Heart left ventricle (tissue), 16 donors: ENCODE measurements at regions of chr22 and their contacts with region 1.

Region 1: DNA sequence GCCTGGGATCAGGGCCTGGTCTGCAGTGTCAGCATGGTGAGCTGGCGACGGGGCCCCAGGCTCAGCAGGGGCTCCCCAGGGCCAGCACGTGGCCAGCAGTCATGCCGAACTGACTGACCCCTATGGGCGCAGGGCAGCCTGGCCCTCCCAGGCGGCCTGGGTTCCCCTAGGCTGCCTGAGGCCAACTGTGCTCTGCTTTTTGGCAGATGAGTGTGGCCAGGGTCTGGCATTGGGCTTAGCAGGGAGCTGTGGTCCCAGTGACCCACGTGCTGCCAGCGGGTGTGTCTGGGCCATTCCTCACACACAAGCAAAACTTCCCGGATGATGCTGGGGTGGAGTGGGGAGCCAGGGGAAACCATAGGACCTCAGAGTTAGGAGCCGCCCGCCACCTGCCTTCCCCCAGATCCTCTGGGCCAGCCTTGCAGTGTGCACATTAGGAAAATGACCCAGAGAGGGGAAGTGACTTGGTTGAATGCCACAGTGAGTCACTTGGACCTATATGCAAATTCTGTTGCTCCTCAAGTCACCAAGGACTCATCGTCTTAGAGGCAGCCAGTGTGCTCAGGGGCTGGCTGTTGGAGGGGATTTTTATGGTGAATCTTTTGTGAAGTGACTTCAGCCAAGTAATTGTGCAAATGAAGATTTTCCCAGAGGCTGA is 6.5 kb downstream of the ADORA2A start:
- DNase-seq: peak in 2 of 5 donors; percentile 49 to 56
- ATAC-seq: peak in 3 of 4 donors; percentile 16 to 33 (median 21)
- H3K4me3 ChIP-seq: no peak overlapping the region
- H3K27ac ChIP-seq: peak overlapping the region in 11 of 12 donors; percentile 30 to 82 (median 68)
- H3K4me1 ChIP-seq: peaks cover 6 to 87% (median 64%) of the 10 kb centered on the region in 12 donors
- H3K27me3 ChIP-seq: no peaks in the 10 kb centered on the region
- CTCF ChIP-seq: no peak
- POLR2A ChIP-seq: no peak

Region 2: DNA sequence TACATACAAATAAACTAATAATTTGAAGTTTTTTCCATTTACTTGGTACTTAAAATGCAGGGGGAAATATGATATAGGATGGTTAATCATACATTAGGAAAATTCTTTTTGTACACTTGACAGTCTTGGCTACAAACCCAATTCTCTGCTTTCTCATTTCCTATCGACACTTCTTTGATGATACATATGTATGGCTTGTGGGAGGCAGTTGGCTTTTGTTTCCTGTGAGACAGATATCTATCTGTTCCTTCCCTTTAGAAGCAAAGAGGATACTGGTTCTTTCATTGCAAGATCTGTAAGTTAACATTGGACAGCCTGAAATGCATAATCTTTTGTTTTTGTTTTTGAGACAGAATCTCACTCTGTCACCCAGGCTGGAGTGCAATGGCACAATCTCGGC is 54.4 kb before region 1 on chr22:
- intact Hi-C with region 1: no loop called
- DNase-seq: no peak
- ATAC-seq: no peak
- H3K4me3 ChIP-seq: no peak overlapping the region
- H3K27ac ChIP-seq: peak overlapping the region in 2 of 12 donors; percentile 12 to 35
- H3K4me1 ChIP-seq: peaks cover 0 to 20% (median 5%) of the 10 kb centered on the region in 12 donors
- H3K27me3 ChIP-seq: no peaks in the 10 kb centered on the region
- CTCF ChIP-seq: no peak
- POLR2A ChIP-seq: no peak

Region 3: DNA sequence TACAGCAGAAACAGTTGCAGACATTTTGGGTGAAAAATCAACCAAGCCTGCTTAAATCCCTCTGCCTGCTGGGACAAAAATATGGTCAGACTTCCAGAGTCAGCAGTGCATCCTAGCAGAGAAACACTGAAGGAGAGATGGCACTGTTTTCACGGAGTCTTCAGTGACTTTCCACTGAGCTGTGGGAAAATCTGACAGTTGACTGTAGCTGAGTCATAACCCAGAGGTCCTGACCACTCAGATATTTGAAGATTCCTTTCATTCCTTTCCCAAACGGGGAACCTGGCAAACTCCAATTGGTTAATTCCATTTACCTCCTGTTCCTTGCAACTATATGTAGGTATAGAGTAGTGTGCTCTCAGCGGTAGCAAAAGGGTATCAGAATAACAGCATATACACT is 40.3 kb after region 1 on chr22:
- intact Hi-C with region 1: loop called in 2 of 10 experiments (anchors 5 kb)
- DNase-seq: no peak
- ATAC-seq: peak in 2 of 4 donors; percentile 39 to 49
- H3K4me3 ChIP-seq: no peak overlapping the region
- H3K27ac ChIP-seq: peak overlapping the region in 8 of 12 donors; percentile 1 to 70 (median 38)
- H3K4me1 ChIP-seq: peaks cover 0 to 39% (median 20%) of the 10 kb centered on the region in 12 donors
- H3K27me3 ChIP-seq: no peaks in the 10 kb centered on the region
- CTCF ChIP-seq: no peak
- POLR2A ChIP-seq: no peak

Region 4: DNA sequence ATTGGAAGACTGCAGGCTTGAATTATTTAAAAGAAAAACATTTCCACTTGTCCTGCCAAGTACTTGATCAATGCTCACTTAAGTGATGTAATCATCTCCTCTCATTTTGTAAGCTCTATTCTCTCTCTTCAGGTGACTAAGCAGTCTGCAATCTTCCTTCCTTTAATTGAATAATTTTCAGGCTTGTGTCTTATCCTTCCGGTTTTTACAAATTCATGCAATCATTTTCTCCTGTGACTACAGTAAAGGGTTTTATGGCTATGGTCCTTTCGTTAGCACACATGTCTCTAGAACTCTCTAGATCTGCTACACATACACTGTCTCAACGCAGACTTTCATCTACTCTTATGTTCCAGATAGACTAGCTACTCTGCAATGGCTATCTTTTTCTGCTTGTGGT is 48.6 kb after region 1 on chr22:
- intact Hi-C with region 1: loop called in 4 of 10 experiments (anchors 5 kb)
- DNase-seq: no peak
- ATAC-seq: peak in 2 of 4 donors; percentile 48 to 69
- H3K4me3 ChIP-seq: no peak overlapping the region
- H3K27ac ChIP-seq: no peak overlapping the region
- H3K4me1 ChIP-seq: peaks cover 0 to 37% (median 5%) of the 10 kb centered on the region in 12 donors
- H3K27me3 ChIP-seq: no peaks in the 10 kb centered on the region
- CTCF ChIP-seq: no peak
- POLR2A ChIP-seq: no peak

Region 5: GRCh38 chr22:24592851-24593558 is 159.1 kb after region 1 on chr22 and contains the start of gene LRRC75B:
- intact Hi-C with region 1: no loop called
- DNase-seq: peak; percentile 88 to 94 (median 93)
- ATAC-seq: peak; percentile 90 to 96 (median 94)
- H3K4me3 ChIP-seq: peak within 1 kb of the TSS; percentile 44 to 86 (median 66)
- H3K27ac ChIP-seq: peak within 1 kb of the TSS; percentile 21 to 88 (median 64)
- H3K4me1 ChIP-seq: peaks cover 0 to 18% (median 4%) of the 10 kb centered on the region in 12 donors
- H3K27me3 ChIP-seq: no peaks in the 10 kb centered on the region
- CTCF ChIP-seq: no peak
- POLR2A ChIP-seq: peak in 1 of 2 donors; percentile 41
- total RNA-seq, gene LRRC75B: 3.7 to 6.5 (median 4.5) TPM